A673 (cell line): ENCODE measurements at regions of chr9 and their contacts with region 1.

Region 1: GRCh38 chr9:9603345-9603744 is 1009.5 kb downstream of the PTPRD start:
- DNase-seq: no peak
- H3K4me3 ChIP-seq: no peak overlapping the region
- H3K27ac ChIP-seq: no peak overlapping the region
- H3K4me1 ChIP-seq: no peaks in the 10 kb centered on the region
- H3K27me3 ChIP-seq: peaks cover 2% of the 10 kb centered on the region
- CTCF ChIP-seq: no peak

Region 2: DNA sequence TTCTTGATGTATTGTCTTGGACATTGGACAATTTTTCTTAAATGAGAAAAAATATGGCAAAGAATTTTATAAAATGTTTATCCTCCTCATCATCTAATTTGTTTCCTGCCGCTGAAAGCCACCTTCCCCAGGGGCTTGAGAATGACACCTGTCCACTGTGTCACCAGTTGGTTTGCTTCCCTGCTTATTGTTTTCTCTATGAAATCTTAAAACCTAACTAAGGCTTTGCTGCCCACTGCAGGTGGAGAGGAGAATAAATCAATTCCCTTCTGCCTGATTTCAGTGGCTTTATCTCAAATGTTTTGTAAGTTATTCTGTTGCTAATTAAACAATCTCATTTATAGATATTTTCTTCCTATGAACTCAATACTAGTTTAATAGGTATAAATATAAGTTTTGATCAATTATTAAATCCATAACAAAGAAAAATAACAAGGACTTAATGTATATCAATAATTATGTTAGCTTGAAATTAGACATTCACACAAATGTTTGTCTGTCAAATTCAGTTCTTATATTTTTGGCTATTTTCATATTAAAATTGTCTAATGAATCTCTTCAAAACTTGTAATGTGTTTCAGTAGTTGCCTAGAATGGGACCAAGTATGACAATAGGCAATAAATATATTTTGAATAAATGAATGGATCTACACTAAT is 187.0 kb after region 1 on chr9:
- CTCF ChIA-PET with region 1: interaction called, 7 read pairs
- POLR2A ChIA-PET with region 1: no interaction called
- intact Hi-C with region 1: loop called (anchors 2 kb)
- DNase-seq: peak; percentile 48
- H3K4me3 ChIP-seq: no peak overlapping the region
- H3K27ac ChIP-seq: no peak overlapping the region
- H3K4me1 ChIP-seq: no peaks in the 10 kb centered on the region
- H3K27me3 ChIP-seq: no peaks in the 10 kb centered on the region
- CTCF ChIP-seq: peak; percentile 61

Region 3: DNA sequence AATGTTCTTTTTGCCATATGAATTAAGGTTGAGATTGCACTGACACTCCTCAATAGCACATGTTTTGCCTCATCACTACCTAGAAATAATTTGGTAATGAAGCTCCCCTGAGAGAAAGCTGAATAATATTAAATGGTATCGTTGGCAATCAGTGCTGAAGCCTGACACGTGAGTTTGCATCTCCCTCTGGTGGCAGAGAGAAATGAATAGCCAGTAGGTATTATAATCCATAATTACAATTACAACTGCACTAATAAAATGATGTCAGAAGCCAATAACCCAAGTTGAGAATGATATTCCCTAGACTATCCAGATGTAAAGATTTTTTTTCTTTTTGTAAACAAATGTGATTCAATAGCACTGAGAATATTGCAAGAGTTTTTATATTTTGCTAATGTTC is 309.1 kb after region 1 on chr9:
- CTCF ChIA-PET with region 1: no interaction called
- POLR2A ChIA-PET with region 1: no interaction called
- intact Hi-C with region 1: loop called (anchors 10 kb)
- DNase-seq: peak; percentile 7
- H3K4me3 ChIP-seq: no peak overlapping the region
- H3K27ac ChIP-seq: no peak overlapping the region
- H3K4me1 ChIP-seq: no peaks in the 10 kb centered on the region
- H3K27me3 ChIP-seq: peaks cover 3% of the 10 kb centered on the region
- CTCF ChIP-seq: peak; percentile 49

Region 4: GRCh38 chr9:9942764-9943424 is 339.5 kb after region 1 on chr9:
- CTCF ChIA-PET with region 1: interaction called, 8 read pairs
- POLR2A ChIA-PET with region 1: no interaction called
- intact Hi-C with region 1: loop called (anchors 5 kb)
- DNase-seq: peak; percentile 72
- H3K4me3 ChIP-seq: no peak overlapping the region
- H3K27ac ChIP-seq: no peak overlapping the region
- H3K4me1 ChIP-seq: no peaks in the 10 kb centered on the region
- H3K27me3 ChIP-seq: no peaks in the 10 kb centered on the region
- CTCF ChIP-seq: peak; percentile 94